Endothelial cell of umbilical vein (primary cell): ENCODE measurements at regions of chr9 and their contacts with region 1.

Region 1: DNA sequence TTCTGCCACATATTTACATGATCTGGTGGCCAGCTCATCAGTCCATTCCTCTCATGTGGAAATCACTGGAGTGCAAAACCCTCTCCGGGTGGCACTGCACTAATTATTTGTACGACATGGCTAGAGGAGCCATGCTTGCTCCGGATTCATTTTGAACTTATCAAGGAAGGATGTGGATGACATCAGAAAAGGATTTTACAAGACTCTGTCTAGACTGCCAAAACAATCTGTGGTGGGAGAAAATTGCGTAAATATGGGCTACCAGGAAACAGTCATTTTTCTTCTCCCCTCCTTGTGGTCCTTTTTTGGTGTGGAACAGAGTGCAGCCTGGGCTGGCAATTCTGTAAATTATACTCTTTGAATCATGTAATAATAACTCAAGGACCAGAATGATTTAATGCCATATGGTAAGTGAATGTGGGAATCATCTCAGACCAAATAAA is 123.4 kb upstream of the IFNE start:
- DNase-seq: peak; percentile 68
- H3K4me3 ChIP-seq: no peak overlapping the region
- H3K27ac ChIP-seq: peak overlapping the region; percentile 39
- H3K4me1 ChIP-seq: peaks cover 10% of the 10 kb centered on the region
- H3K27me3 ChIP-seq: no peaks in the 10 kb centered on the region
- CTCF ChIP-seq: no peak
- POLR2A ChIP-seq: no peak

Region 2: GRCh38 chr9:21392270-21392669 is 213.2 kb before region 1 on chr9:
- CTCF ChIA-PET with region 1: no interaction called
- POLR2A ChIA-PET with region 1: no interaction called
- dilution Hi-C with region 1: no loop called
- intact Hi-C with region 1: no loop called
- DNase-seq: no peak
- H3K4me3 ChIP-seq: no peak overlapping the region
- H3K27ac ChIP-seq: no peak overlapping the region
- H3K4me1 ChIP-seq: no peaks in the 10 kb centered on the region
- H3K27me3 ChIP-seq: peaks cover 24 to 73% of the 10 kb centered on the region in 2 experiments
- CTCF ChIP-seq: peak in 1 of 2 donors; percentile 15
- POLR2A ChIP-seq: no peak

Region 3: DNA sequence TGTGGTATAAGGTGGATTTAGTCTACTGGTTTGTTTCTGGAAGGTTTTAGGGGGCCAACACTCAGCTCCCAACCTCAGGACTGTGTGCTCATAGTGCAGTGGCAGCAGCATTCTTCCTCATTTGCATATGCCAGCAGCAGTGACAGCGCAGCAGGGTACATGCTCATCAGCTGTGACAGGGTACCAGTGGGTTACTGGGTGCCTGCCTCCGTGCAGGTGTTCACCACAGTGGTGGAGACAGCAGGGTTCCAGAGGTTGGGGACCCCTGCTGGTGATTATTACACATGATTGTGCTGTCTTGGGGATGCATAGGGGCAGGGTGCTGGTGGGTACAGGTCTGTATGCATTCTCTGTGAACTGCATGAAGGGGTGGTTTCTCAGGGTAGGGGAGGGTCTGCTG is 77.9 kb before region 1 on chr9:
- CTCF ChIA-PET with region 1: no interaction called
- POLR2A ChIA-PET with region 1: no interaction called
- dilution Hi-C with region 1: no loop called
- intact Hi-C with region 1: no loop called
- DNase-seq: no peak
- H3K4me3 ChIP-seq: no peak overlapping the region
- H3K27ac ChIP-seq: no peak overlapping the region
- H3K4me1 ChIP-seq: no peaks in the 10 kb centered on the region
- H3K27me3 ChIP-seq: no peaks in the 10 kb centered on the region
- CTCF ChIP-seq: no peak
- POLR2A ChIP-seq: no peak

Region 4: GRCh38 chr9:21549251-21549765 is 56.2 kb before region 1 on chr9:
- CTCF ChIA-PET with region 1: no interaction called
- POLR2A ChIA-PET with region 1: no interaction called
- dilution Hi-C with region 1: no loop called
- intact Hi-C with region 1: loop called (anchors 1 kb)
- DNase-seq: peak; percentile 100
- H3K4me3 ChIP-seq: no peak overlapping the region
- H3K27ac ChIP-seq: peak overlapping the region; percentile 92
- H3K4me1 ChIP-seq: peaks cover 61% of the 10 kb centered on the region
- H3K27me3 ChIP-seq: no peaks in the 10 kb centered on the region
- CTCF ChIP-seq: no peak
- POLR2A ChIP-seq: peak; percentile 57

Region 5: DNA sequence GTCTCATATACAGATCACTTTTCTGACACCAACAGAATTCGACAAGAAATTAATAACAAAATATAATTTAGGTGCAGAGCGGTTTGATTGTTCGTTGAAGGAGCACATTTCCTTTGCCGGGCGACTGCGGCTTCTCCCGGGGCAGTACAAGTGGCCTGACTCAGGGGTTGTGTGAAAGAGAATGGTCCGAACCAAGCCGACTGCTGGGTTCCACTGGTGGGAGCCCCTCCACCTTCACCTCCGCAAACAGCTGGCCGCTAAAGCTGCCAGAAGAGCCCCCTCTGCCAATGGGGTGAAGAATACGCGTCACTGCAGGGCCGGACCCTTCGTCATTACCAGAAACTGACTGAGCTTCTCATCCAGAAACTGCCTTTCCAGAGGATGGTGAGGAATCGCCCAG is 32.6 kb after region 1 on chr9:
- CTCF ChIA-PET with region 1: no interaction called
- POLR2A ChIA-PET with region 1: no interaction called
- dilution Hi-C with region 1: no loop called
- intact Hi-C with region 1: loop called (anchors 2 kb)
- DNase-seq: no peak
- H3K4me3 ChIP-seq: no peak overlapping the region
- H3K27ac ChIP-seq: no peak overlapping the region
- H3K4me1 ChIP-seq: no peaks in the 10 kb centered on the region
- H3K27me3 ChIP-seq: no peaks in the 10 kb centered on the region
- CTCF ChIP-seq: no peak
- POLR2A ChIP-seq: no peak

Region 6: GRCh38 chr9:21677834-21678233 is 72.3 kb after region 1 on chr9:
- CTCF ChIA-PET with region 1: no interaction called
- POLR2A ChIA-PET with region 1: no interaction called
- dilution Hi-C with region 1: no loop called
- intact Hi-C with region 1: loop called (anchors 5 kb)
- DNase-seq: peak; percentile 88
- H3K4me3 ChIP-seq: peak overlapping the region in 1 of 3 experiments; percentile 59
- H3K27ac ChIP-seq: peak overlapping the region; percentile 85
- H3K4me1 ChIP-seq: peaks cover 58% of the 10 kb centered on the region
- H3K27me3 ChIP-seq: no peaks in the 10 kb centered on the region
- CTCF ChIP-seq: no peak
- POLR2A ChIP-seq: no peak

Region 7: DNA sequence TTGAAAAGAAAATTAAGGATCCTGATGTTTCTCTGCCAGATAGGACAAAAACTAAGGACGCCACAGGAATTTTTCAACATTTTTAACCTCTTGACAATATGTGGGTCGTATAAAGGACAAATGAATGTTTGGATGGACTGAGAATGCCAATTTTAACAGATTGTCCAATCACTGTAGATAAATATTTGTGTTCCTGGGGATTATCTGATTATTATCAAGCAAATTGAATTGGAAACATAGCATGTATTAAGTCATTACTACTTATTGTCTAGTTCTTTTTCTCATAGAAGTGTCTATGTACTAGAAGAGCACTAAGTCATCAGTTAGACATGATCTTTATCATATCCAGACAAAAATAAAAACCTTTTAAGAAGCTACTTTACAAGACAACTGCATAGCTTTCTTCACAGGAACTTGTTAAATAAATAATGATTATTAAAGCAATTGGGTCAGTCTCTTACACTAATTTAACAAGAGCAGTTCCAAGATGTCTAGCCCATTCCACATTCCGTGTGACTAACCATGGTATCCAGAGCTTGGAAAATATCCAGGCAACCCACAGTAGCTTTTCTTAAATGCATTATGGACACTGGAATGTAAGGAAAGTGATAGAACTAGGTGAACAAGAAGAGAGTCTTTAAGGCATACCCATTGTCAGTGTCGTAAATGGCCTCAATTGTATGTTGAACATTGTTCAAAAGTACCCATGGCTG is 531.1 kb after region 1 on chr9:
- CTCF ChIA-PET with region 1: no interaction called
- POLR2A ChIA-PET with region 1: no interaction called
- dilution Hi-C with region 1: no loop called
- intact Hi-C with region 1: no loop called
- DNase-seq: no peak
- H3K4me3 ChIP-seq: no peak overlapping the region
- H3K27ac ChIP-seq: no peak overlapping the region
- H3K4me1 ChIP-seq: no peaks in the 10 kb centered on the region
- H3K27me3 ChIP-seq: no peaks in the 10 kb centered on the region
- CTCF ChIP-seq: no peak
- POLR2A ChIP-seq: no peak